AG04450 (cell line): ENCODE measurements at regions of chr18 and their contacts with region 1.

Region 1: DNA sequence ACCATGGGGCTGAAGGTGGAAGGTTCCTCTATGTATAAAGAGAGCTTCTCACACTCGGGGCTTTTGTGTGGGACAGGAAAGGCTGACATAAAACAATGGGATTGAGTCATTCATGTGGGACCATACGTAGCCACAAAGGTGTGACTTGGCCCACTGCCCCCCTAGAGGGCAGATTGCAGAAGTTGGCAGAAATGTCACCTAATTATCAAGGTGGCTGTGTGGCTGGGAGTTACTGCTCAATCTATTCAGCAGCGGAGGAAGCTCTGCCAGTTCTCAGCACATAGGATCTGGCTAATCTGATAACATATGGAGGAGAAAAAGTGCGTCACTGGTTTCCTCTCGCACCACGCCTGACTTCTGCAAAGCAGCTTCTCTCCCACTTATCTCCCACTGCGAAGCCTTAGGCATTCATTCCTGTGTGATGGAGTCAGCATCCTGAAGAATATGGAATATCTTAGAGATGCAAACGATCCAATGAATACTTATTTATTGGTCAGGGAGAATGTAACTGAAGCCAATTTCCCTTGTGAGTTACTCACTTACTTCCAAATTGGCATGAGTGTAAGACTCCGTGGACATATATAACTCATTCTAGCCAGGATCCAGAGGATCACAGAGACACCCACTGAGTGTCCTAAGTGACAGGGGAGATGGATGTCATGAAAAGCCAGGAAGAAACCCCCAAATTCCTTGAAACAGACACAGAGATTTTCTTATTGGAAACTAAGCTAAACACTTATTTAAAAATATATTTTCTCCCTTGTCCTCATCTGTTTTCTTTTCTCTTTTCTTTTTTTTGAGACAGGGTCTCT is 344.8 kb downstream of the TGIF1 start:
- DNase-seq: peak; percentile 89
- H3K4me3 ChIP-seq: no peak overlapping the region
- H3K27ac ChIP-seq: peak overlapping the region; percentile 91
- H3K27me3 ChIP-seq: no peaks in the 10 kb centered on the region
- CTCF ChIP-seq: no peak

Region 2: GRCh38 chr18:3753106-3753505 is 41.6 kb before region 1 on chr18:
- CTCF ChIA-PET with region 1: no interaction called
- POLR2A ChIA-PET with region 1: interaction called, 11 read pairs
- DNase-seq: no peak
- H3K4me3 ChIP-seq: no peak overlapping the region
- H3K27ac ChIP-seq: no peak overlapping the region
- H3K27me3 ChIP-seq: no peaks in the 10 kb centered on the region
- CTCF ChIP-seq: no peak